Panc1 (cell line): ENCODE measurements at regions of chr5 and their contacts with region 1.

Region 1: DNA sequence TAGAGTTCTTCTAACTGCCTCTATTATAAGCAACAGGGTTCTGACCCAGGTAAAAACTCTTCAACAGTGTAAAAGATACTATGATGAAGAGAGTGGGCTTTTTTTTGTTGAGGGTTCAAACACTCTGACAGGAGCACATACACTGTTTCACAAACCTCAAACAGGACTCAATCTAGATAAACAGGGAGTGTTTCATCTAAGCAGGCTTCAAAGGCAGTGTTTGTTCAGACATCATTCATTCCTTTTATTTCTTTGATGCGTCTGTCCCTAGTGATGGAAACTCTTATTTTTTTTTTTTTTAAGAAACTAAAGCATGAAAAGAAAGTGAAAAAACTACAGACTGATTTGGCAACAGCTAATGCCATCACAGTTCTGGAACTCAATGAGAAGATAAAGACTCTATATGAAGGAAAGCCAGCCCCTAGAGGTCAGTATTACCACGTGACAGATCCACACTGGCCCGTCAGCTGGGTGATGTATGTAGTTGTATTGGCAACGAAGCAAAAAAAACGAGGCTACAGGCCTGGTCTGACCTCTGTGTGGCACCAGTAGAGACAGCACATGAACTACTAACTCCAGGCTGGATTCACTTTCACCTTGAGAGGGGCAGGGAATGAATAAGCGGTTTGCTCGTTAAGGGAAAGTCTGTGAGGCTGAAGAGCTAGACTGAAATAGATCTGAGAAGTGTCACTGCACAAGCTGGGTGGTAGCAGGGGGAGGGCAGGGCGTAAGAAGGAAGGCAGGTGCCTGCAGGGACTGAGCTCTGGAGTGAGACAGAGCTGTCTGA is 172.2 kb downstream of the CCDC192 start:
- DNase-seq: peak; percentile 75
- ATAC-seq: peak; percentile 92
- H3K4me3 ChIP-seq: no peak overlapping the region
- H3K27ac ChIP-seq: no peak overlapping the region
- H3K4me1 ChIP-seq: no peaks in the 10 kb centered on the region
- H3K27me3 ChIP-seq: no peaks in the 10 kb centered on the region; the same call in 1 of the 2 replicates
- CTCF ChIP-seq: peak; percentile 69

Region 2: DNA sequence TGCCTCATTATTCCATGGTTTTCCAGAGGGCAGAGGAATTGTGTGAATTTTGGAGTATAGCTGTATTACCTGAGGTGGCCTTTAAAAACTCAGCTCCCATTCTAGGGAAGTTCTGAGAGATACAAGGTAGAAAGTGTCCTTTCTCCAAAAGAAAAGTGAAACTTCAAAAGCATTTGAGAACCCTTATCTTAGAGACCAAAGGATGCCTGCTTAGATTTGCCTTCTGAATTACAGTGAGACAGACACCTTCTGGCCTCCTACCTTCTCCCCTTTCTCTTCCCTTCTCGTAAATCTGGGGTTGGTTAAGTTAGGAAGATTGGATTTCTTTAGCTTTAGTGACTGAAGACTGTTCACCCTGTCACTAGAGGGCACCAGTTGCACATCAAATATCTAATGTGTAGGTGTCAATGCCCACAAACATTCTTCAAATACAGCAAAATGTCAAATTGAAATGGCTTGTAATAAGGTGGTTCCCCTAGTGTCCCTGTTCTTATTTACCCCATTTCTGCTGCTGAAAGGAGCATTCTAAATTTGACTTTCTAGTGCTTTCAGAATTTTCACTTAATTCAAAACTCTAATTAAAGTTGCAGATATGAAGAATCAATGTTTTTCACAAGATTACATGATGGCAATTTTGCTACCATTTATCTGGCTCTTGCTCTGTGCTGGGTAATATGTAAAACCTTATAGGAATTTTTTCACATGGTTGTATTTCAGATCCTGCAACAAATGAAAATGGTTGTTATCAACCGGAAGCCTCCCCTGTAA is 311.2 kb before region 1 on chr5:
- CTCF ChIA-PET with region 1: no interaction called
- POLR2A ChIA-PET with region 1: no interaction called
- in situ Hi-C with region 1: no loop called
- intact Hi-C with region 1: loop called (anchors 5 kb)
- DNase-seq: peak; percentile 42
- ATAC-seq: peak; percentile 94
- H3K4me3 ChIP-seq: no peak overlapping the region
- H3K27ac ChIP-seq: no peak overlapping the region
- H3K4me1 ChIP-seq: no peaks in the 10 kb centered on the region
- H3K27me3 ChIP-seq: no peaks in the 10 kb centered on the region; the same call in 1 of the 2 replicates
- CTCF ChIP-seq: peak; percentile 72